HEK293 (cell line): ENCODE measurements at regions of chr19 and their contacts with region 1.

Region 1: GRCh38 chr19:29752450-29753025 is 37.5 kb upstream of the C19orf12 start:
- H3K4me3 ChIP-seq: no peak overlapping the region
- H3K27ac ChIP-seq: no peak overlapping the region
- H3K4me1 ChIP-seq: no peaks in the 10 kb centered on the region
- CTCF ChIP-seq: no peak

Region 2: GRCh38 chr19:29308977-29309590 is 443.5 kb before region 1 on chr19:
- CTCF ChIA-PET with region 1: no interaction called
- POLR2A ChIA-PET with region 1: no interaction called
- H3K4me3 ChIP-seq: no peak overlapping the region
- H3K27ac ChIP-seq: no peak overlapping the region
- H3K4me1 ChIP-seq: no peaks in the 10 kb centered on the region; the same call in 1 of the 2 replicates
- CTCF ChIP-seq: no peak

Region 3: GRCh38 chr19:29785955-29786589 is 33.5 kb after region 1 on chr19:
- CTCF ChIA-PET with region 1: no interaction called
- POLR2A ChIA-PET with region 1: interaction called, 11 read pairs
- H3K4me3 ChIP-seq: no peak overlapping the region
- H3K27ac ChIP-seq: no peak overlapping the region
- H3K4me1 ChIP-seq: no peaks in the 10 kb centered on the region
- CTCF ChIP-seq: peak; percentile 64; the same call in 1 of the 2 replicates